Posterior cingulate gyrus (tissue), 11 donors: ENCODE measurements at regions of chr15 and their contacts with region 1.

Region 1: GRCh38 chr15:61051569-61052031 is 177.5 kb downstream of the RORA start:
- DNase-seq: peak in 8 of 10 donors; percentile 28 to 89 (median 55)

Region 2: DNA sequence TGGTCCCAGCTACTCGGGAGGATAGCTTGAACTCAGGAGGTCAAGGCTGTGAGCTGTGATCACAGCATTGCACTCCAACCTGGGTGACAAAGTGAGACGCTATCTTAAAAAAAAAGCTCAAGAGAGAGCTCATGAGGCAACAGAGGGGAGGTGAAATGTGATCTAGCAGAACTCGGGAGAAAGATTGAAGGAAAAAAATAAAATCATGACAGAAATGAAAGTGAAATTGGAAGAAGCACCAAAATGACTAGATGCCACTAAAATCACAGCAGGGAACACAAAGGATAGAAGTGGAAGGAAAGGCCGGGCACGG is 1253.0 kb before region 1 on chr15:
- intact Hi-C with region 1: no loop called
- DNase-seq: no peak

Region 3: GRCh38 chr15:60592371-60593169 is 459.0 kb before region 1 on chr15:
- intact Hi-C with region 1: loop called (anchors 5 kb)
- DNase-seq: peak; percentile 76 to 97 (median 84)

Region 4: DNA sequence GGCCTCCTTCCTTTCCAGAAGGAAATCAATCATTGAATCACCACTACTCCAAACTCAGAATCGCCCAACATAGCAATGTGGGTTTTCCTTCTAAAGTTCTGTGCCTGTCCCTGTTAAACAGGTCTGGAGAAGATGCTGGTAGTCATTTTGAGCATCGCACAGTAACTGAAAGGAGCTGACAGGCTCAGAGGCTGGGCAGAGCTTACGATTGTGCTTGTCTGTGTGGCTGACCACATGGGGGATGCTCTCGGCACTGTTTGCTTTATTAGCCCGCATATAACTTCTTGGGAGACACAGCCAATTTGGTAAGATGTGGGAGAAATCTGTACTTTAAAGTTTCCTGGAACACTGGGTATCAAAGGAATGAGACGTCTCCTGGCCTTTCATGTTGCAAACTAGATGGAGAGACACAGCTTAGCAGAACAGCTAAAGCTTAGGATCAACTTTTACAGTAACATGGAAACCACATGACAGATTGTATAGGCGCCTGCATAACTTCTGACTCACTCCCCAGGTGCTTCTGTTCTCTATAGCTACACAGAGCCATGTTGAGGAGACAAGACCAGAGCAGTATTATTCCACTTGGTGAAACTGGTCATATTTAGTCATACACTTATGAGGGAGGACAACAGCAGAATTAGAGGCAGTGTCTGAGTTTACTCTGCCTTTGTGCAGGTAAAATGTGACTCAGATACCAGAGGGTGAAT is 196.6 kb before region 1 on chr15:
- intact Hi-C with region 1: no loop called
- DNase-seq: no peak

Region 5: GRCh38 chr15:61099030-61099800 is 47.6 kb after region 1 on chr15:
- intact Hi-C with region 1: no loop called
- DNase-seq: no peak